Activated CD8-positive, alpha-beta T cell treated with anti-CD3 and anti-CD28 coated beads for 36 hours (primary cell): ENCODE measurements at regions of chr17 and their contacts with region 1.

Region 1: DNA sequence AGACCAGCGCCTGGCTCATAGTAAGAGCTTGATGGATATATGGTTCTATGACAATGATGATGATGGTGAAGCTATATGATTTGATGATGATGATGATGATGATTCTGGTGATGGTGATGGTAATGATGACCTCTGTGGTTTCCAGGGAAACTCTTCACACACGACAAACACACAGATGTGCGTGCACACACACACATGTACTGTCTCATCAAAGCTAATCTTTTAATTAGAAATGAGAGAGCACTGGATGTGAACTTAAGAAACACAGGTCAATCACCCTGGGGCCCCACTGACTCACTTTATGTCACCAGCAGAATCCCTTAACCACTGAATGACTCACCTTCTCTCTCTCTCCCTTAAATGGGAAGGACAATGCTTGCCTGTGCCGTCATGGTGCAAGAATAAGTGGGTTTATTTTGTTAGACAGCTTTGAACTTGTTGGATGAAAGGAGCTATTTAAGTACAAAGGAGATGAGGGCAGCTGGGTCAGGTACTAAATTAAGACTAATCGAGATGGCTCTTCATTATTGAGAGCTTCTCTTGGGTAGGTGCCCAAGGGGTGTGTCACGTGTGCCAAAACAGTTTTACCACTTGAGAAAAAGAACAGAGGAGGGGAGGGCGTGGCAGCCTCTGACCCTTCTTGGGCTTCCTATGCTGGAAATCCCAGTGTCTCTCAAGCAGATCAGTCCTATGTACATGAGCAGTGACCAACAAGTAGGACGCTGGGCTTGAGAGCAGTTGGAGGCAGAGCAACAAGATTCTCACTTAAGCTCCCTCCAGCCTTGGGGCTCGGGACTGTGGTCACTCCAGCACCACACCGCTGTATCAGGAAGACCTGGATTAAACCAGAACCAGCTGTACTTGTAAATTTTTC is 6.6 kb upstream of the KRT31 start:
- DNase-seq: peak; percentile 89
- ATAC-seq: peak; percentile 90
- H3K4me3 Mint-ChIP-seq: no peak overlapping the region
- H3K27ac Mint-ChIP-seq: peak overlapping the region; percentile 70
- H3K4me1 Mint-ChIP-seq: peaks cover 36% of the 10 kb centered on the region
- H3K27me3 Mint-ChIP-seq: no peaks in the 10 kb centered on the region
- CTCF ChIP-seq: no peak

Region 2: GRCh38 chr17:41417576-41418015 is 13.6 kb after region 1 on chr17:
- CTCF ChIA-PET with region 1: interaction called, 19 read pairs
- POLR2A ChIA-PET with region 1: no interaction called
- intact Hi-C with region 1: no loop called
- DNase-seq: peak; percentile 13
- ATAC-seq: no peak
- H3K4me3 Mint-ChIP-seq: no peak overlapping the region
- H3K27ac Mint-ChIP-seq: no peak overlapping the region
- H3K4me1 Mint-ChIP-seq: peaks cover 4% of the 10 kb centered on the region
- H3K27me3 Mint-ChIP-seq: no peaks in the 10 kb centered on the region
- CTCF ChIP-seq: no peak